ENCODE measurements at regions of chr12 and their contacts with region 1.

Region 1: GRCh38 chr12:104513681-104514080 is 56.9 kb downstream of the CHST11 start:
- DNase-seq: no peak
- H3K4me3 ChIP-seq: no peak overlapping the region
- H3K27ac ChIP-seq: no peak overlapping the region
- H3K4me1 ChIP-seq: peaks cover 25 to 87% (median 70%) of the 10 kb centered on the region in 4 experiments
- H3K27me3 ChIP-seq: no peaks in the 10 kb centered on the region

Region 2: DNA sequence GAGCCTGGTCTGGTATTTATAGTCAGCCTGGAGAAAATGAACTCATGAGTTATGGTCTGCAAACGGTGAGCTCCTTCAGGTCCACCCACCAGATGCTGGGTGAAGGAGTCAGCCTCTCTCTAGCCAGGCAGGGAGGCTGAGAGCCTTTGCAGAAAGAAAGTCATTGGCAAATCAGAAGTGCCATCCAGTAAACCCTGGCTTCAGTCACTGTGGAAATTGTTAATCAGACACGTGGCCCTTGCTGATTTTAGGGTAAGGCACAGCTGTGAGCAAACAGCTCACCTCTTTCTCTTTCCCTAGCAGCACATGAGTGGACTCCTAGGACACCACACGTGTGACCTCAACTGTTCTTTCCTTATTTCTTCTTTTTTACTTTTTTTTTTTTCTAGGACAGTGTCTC is 12.0 kb before region 1 on chr12:
- CTCF ChIA-PET with region 1: interaction called, 12 read pairs
- POLR2A ChIA-PET with region 1: interaction called, 3 read pairs
- DNase-seq: no peak
- H3K4me3 ChIP-seq: no peak overlapping the region
- H3K27ac ChIP-seq: no peak overlapping the region
- H3K4me1 ChIP-seq: peaks cover 11 to 85% (median 69%) of the 10 kb centered on the region in 4 experiments
- H3K27me3 ChIP-seq: no peaks in the 10 kb centered on the region

Measured in common myeloid progenitor, CD34-positive (primary cell).